ENCODE measurements at regions of chr6 and their contacts with region 1.

Region 1: DNA sequence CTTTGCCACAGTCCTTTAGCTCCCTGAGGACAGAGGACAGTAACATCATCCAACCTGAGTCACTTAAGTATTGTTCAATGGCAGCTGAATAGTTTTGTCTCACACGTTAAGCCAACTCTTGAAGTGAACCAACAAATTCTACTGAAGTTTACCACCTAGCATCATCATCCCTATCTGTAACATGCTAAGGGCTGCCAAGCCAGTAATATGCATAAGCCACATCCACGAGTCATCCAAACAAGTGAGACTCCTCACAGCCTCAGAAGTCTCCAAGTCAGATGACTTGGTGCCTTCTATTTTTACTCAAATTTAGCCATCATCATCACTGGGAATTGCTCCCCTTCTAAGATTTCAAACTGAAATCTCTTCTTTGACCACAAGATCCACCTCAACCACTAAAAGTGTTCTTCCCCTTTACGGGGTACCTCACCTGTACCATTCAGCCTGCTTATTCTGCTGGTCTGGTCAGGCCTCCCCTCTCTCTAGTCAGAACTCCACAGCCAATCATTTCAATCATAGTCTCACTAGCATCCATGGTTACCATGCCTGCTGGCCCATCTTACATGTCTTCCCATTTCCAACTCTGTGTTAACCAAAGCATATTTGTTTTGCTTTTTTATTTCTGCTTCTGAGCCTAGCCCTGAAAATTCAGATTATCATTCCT is 73.7 kb downstream of the DTNBP1 start:
- DNase-seq: peak; percentile 92
- ATAC-seq: peak; percentile 99
- H3K4me3 ChIP-seq: no peak overlapping the region
- H3K27ac ChIP-seq: no peak overlapping the region
- H3K4me1 ChIP-seq: 0 out of 2 replicates have a peak, but pooled peaks cover 3% of the 10 kb centered on the region
- H3K27me3 ChIP-seq: no peaks in the 10 kb centered on the region
- CTCF ChIP-seq: no peak
- POLR2A ChIP-seq: no peak
- RAD21 ChIP-seq: no peak

Region 2: GRCh38 chr6:15551798-15552197 is 37.3 kb before region 1 on chr6:
- CTCF ChIA-PET with region 1: no interaction called
- POLR2A ChIA-PET with region 1: no interaction called
- dilution Hi-C with region 1: no loop called
- in situ Hi-C with region 1: no loop called
- intact Hi-C with region 1: loop called (anchors 5 kb)
- DNase-seq: peak; percentile 13
- ATAC-seq: no peak
- H3K4me3 ChIP-seq: no peak overlapping the region
- H3K27ac ChIP-seq: no peak overlapping the region
- H3K4me1 ChIP-seq: peaks cover 3% of the 10 kb centered on the region
- H3K27me3 ChIP-seq: no peaks in the 10 kb centered on the region
- CTCF ChIP-seq: no peak
- POLR2A ChIP-seq: no peak
- RAD21 ChIP-seq: no peak

Region 3: DNA sequence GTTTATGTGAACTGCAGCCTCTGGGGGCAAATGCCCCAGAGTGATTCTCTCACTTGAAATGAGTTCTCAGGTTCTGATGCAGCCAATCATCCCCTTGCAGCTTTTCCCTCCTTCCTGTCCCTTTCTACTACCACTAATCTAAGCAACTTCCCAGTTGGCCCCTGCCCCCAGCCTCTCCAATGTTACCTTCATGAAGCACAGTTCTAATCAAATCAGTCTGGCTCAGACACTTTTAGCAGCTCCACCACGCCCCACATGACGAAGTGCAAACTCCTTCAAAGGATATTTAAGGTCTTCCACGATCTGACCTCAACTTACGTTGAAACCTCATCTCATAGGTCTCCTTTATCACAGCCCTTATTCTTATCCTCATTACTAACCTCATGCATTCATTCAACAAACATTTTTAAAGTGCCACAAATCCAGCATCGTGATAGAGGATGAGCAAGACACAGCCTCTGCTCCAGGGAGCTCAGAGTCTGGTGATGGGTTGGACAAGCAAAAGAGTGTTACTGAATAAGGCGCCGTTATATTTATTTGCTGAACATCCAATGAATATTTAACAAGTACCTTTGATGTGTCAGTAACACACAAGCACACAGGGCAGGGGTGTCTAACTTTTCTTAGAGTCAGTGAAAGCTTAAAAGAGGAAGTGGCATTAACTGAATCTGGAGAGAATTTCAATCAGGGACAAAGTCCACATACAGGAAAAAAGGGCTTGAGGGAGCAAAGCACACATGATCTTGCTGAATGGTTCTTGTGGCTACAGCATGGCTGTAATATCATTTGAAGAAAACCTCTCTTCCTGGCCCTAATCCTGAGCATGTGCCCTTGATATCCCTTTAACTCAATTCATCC is 94.1 kb after region 1 on chr6:
- CTCF ChIA-PET with region 1: no interaction called
- POLR2A ChIA-PET with region 1: no interaction called
- dilution Hi-C with region 1: no loop called
- in situ Hi-C with region 1: no loop called
- intact Hi-C with region 1: no loop called
- DNase-seq: no peak
- ATAC-seq: no peak
- H3K4me3 ChIP-seq: no peak overlapping the region
- H3K27ac ChIP-seq: no peak overlapping the region
- H3K4me1 ChIP-seq: no peaks in the 10 kb centered on the region
- H3K27me3 ChIP-seq: peaks cover 31% of the 10 kb centered on the region
- CTCF ChIP-seq: no peak
- POLR2A ChIP-seq: no peak
- RAD21 ChIP-seq: no peak

Region 4: DNA sequence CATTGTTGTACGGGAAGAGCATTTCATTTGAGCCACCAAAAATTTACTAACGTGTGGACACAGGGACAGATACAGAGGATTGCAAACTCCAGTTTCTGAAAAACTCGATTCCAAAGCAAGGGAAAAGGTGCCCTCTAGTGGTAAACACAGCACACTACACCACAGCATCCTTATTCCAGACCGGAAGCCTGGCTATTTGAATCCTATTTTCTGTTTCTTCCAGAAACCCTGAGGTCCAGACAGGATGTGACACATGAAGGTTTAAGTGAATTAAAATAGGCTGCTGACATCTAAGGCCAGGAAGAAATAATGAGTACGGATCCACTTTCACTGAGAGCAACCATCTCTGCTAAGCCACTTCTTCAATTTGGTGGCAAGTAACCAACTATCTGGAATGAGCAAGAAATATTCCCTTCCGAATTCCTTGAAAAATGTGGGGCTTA is 617.5 kb after region 1 on chr6:
- CTCF ChIA-PET with region 1: interaction called, 10 read pairs
- POLR2A ChIA-PET with region 1: no interaction called
- dilution Hi-C with region 1: no loop called
- in situ Hi-C with region 1: no loop called
- intact Hi-C with region 1: no loop called
- DNase-seq: peak; percentile 87
- ATAC-seq: peak; percentile 85
- H3K4me3 ChIP-seq: no peak overlapping the region
- H3K27ac ChIP-seq: no peak overlapping the region
- H3K4me1 ChIP-seq: 0 out of 2 replicates have a peak, but pooled peaks cover 4% of the 10 kb centered on the region
- H3K27me3 ChIP-seq: peaks cover 3% of the 10 kb centered on the region; the same call in 1 of the 2 replicates
- CTCF ChIP-seq: peak; percentile 98
- POLR2A ChIP-seq: no peak
- RAD21 ChIP-seq: peak; percentile 95